Activated CD4-positive, alpha-beta T cell treated with anti-CD3 and anti-CD28 coated beads for 36 hours (primary cell): ENCODE measurements at regions of chr3 and their contacts with region 1.

Region 1: GRCh38 chr3:9986237-9986725 is 360 bp downstream of the EMC3 start:
- DNase-seq: no peak
- ATAC-seq: peak; percentile 31
- H3K4me3 Mint-ChIP-seq: peak overlapping the region; percentile 94
- H3K27ac Mint-ChIP-seq: peak overlapping the region; percentile 98
- H3K4me1 Mint-ChIP-seq: peaks cover 32% of the 10 kb centered on the region
- H3K27me3 Mint-ChIP-seq: no peaks in the 10 kb centered on the region

Region 2: GRCh38 chr3:9649791-9650521 is 336.3 kb before region 1 on chr3:
- CTCF ChIA-PET with region 1: no interaction called
- POLR2A ChIA-PET with region 1: no interaction called
- intact Hi-C with region 1: loop called in 1 of 2 experiments (anchors 2 kb)
- DNase-seq: no peak
- ATAC-seq: peak; percentile 1
- H3K4me3 Mint-ChIP-seq: peak overlapping the region; percentile 95
- H3K27ac Mint-ChIP-seq: peak overlapping the region; percentile 92
- H3K4me1 Mint-ChIP-seq: peaks cover 24% of the 10 kb centered on the region
- H3K27me3 Mint-ChIP-seq: no peaks in the 10 kb centered on the region

Region 3: DNA sequence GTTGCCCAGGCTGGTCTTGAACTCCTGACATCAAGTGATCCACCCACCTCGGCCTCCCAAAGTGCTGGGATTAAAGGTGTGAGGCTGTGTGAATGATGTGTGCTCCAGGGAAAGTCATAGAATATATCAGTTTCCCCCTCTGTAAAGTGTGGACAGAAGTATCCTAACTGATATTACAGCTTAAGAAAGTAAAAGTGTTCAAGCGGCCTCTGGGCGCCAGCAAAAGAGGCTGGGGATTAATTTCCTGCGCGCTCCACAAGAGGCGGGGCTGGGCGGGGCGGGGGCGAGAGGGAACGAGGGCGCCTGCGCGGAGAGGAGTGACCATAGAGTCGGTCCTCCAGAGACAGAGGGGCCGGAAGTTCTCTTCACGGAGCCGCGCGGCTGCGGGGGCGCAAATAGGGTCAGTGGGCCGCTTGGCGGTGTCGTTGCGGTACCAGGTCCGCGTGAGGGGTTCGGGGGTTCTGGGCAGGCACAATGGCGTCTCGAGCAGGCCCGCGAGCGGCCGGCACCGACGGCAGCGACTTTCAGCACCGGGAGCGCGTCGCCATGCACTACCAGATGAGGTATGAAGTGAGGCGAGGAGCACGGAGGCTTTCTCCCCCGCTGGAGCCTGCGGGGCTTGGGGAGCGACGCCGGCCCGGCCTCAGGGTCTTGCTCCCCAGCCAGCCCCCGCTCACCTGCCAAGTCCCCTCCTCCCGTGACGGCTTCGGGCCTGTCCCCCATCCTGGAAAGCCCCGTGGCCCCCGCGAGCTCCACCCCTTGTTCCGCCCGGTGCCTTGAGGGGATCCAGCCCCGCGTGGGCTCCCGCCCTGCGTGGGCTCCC is 95.8 kb before region 1 on chr3 and contains the start of gene JAGN1:
- CTCF ChIA-PET with region 1: no interaction called
- POLR2A ChIA-PET with region 1: interaction called, 5 read pairs
- intact Hi-C with region 1: loop called in 1 of 2 experiments (anchors 1 kb)
- DNase-seq: peak; percentile 96
- ATAC-seq: peak; percentile 82
- H3K4me3 Mint-ChIP-seq: peak within 1 kb of the TSS; percentile 96
- H3K27ac Mint-ChIP-seq: peak within 1 kb of the TSS; percentile 98
- H3K4me1 Mint-ChIP-seq: peaks cover 34% of the 10 kb centered on the region
- H3K27me3 Mint-ChIP-seq: no peaks in the 10 kb centered on the region
- total RNA-seq, gene JAGN1: 27.1 to 33.0 TPM

Region 4: GRCh38 chr3:10142707-10143566 is 156.7 kb after region 1 on chr3:
- CTCF ChIA-PET with region 1: no interaction called
- POLR2A ChIA-PET with region 1: no interaction called
- intact Hi-C with region 1: loop called in 1 of 2 experiments (anchors 1 kb)
- DNase-seq: peak; percentile 57
- ATAC-seq: peak; percentile 15
- H3K4me3 Mint-ChIP-seq: peak overlapping the region; percentile 97
- H3K27ac Mint-ChIP-seq: peak overlapping the region; percentile 89
- H3K4me1 Mint-ChIP-seq: peaks cover 28% of the 10 kb centered on the region
- H3K27me3 Mint-ChIP-seq: no peaks in the 10 kb centered on the region

Region 5: DNA sequence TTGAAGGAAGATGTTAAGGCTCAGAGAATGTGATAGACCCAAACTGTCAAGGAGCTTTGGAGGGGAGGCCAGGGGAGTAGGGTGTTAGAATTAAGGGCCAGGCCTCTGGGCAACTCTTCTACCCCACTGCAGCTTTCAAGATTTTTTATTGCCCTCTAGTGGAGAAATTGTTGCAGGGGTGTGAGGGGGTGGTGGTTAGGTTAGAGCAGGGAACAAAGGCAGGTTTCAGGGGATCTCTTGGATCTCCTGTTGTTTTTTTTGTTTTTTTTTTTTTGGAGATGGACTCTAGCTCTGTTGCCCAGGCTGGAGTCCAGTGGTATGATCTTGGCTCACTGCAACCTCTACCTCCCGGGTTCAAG is 336.1 kb after region 1 on chr3:
- CTCF ChIA-PET with region 1: no interaction called
- POLR2A ChIA-PET with region 1: interaction called, 3 read pairs
- intact Hi-C with region 1: loop called in 1 of 2 experiments (anchors 1 kb)
- DNase-seq: peak; percentile 37
- ATAC-seq: peak; percentile 22
- H3K4me3 Mint-ChIP-seq: no peak overlapping the region
- H3K27ac Mint-ChIP-seq: peak overlapping the region; percentile 3
- H3K4me1 Mint-ChIP-seq: peaks cover 23% of the 10 kb centered on the region
- H3K27me3 Mint-ChIP-seq: peaks cover 4% of the 10 kb centered on the region